ENCODE measurements at regions of chr6 and their contacts with region 1.

Region 1: DNA sequence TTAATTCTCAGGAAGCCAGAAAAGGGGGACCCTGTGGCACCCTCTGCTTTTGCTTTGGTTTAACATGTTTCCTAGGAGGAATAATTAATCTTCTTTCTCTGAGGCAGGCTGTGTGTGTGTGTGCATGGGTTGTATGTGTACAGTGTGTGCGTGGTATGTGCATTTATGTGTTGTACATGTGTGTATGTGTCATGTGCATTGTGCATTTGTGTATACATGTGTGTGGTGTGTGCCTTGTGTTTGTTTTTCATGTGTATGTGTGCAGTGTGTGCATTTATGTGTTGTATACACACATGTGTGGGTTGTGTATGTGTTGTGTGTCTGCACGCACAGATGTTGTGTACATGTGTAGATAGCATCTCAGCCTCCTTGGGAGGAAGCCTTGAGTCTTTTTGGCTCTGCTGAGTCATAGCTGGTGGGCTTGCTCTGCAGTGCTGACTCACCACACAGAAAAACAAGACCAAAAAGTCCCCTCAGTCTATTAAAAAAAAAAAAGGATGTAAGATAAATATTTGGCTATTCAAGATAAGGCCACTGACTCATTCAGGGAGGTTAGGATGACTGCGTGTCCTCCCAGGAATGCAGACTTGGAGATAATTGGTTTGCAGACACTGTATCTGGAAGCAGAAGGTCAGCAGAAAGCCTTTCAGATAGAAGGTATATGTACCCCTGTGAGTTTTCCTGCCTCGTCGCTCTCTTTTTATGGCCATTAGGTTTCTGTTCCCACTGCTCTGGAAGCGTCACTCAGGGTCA is 58.6 kb downstream of the SYNJ2 start:
- DNase-seq: peak in 1 of 5 donors; percentile 53
- ATAC-seq: peak in 3 of 4 donors; percentile 2 to 28 (median 4)
- H3K4me3 ChIP-seq: no peak overlapping the region
- H3K27ac ChIP-seq: peak overlapping the region; percentile 72 to 98 (median 92)
- H3K4me1 ChIP-seq: peaks cover 8 to 63% (median 49%) of the 10 kb centered on the region in 12 donors
- H3K27me3 ChIP-seq: no peaks in the 10 kb centered on the region
- CTCF ChIP-seq: no peak
- POLR2A ChIP-seq: peak in 1 of 2 donors; percentile 35

Region 2: GRCh38 chr6:158009114-158009891 is 30.9 kb before region 1 on chr6:
- intact Hi-C with region 1: loop called in 1 of 10 experiments (anchors 5 kb)
- DNase-seq: peak in 4 of 5 donors; percentile 58 to 78 (median 70)
- ATAC-seq: peak; percentile 73 to 91 (median 88)
- H3K4me3 ChIP-seq: no peak overlapping the region
- H3K27ac ChIP-seq: peak overlapping the region in 11 of 12 donors; percentile 26 to 75 (median 55)
- H3K4me1 ChIP-seq: peaks cover 8 to 47% (median 34%) of the 10 kb centered on the region in 12 donors
- H3K27me3 ChIP-seq: no peaks in the 10 kb centered on the region
- CTCF ChIP-seq: no peak
- POLR2A ChIP-seq: no peak

Measured in heart left ventricle (tissue), 16 donors.